HEK293T (cell line): ENCODE measurements at regions of chr12 and their contacts with region 1.

Region 1: GRCh38 chr12:46124848-46125619 is 134.7 kb upstream of the SCAF11 start:
- DNase-seq: peak; percentile 60

Region 2: GRCh38 chr12:45670346-45671065 is 454.5 kb before region 1 on chr12:
- CTCF ChIA-PET with region 1: no interaction called
- POLR2A ChIA-PET with region 1: no interaction called
- DNase-seq: no peak

Region 3: GRCh38 chr12:46071769-46072624 is 53.0 kb before region 1 on chr12:
- CTCF ChIA-PET with region 1: interaction called, 18 read pairs
- POLR2A ChIA-PET with region 1: no interaction called
- DNase-seq: peak; percentile 81

Region 4: DNA sequence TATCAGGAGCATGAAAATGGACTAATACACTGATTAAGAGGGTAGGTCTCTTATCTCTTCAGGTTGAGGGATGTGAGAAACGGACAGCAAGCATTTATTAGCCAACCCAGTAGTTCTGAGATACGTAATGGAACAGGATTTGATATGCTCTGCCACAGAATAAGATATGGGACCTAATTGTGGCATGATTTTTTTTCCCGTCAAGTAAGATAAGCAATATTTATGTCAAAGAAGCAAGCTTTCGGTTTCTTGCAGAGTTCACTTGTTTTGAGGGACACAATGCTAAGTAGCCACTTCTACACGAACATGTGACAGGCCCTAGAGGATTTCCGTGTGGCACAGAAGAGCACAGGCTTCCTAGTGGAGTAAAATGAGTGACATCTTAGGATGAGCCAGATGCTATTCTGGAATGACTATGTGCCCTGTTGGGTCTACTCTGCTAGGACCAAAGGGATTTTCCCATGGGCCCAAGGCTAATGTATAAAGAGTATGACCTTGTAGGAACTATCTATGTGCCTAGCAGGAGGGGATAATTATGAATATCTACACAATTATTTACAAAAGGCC is 85.9 kb after region 1 on chr12:
- CTCF ChIA-PET with region 1: no interaction called
- POLR2A ChIA-PET with region 1: no interaction called
- DNase-seq: no peak

Region 5: GRCh38 chr12:46523863-46524770 is 399.1 kb after region 1 on chr12:
- CTCF ChIA-PET with region 1: no interaction called
- POLR2A ChIA-PET with region 1: no interaction called
- DNase-seq: no peak